AG04449 (cell line): ENCODE measurements at regions of chr12 and their contacts with region 1.

Region 1: DNA sequence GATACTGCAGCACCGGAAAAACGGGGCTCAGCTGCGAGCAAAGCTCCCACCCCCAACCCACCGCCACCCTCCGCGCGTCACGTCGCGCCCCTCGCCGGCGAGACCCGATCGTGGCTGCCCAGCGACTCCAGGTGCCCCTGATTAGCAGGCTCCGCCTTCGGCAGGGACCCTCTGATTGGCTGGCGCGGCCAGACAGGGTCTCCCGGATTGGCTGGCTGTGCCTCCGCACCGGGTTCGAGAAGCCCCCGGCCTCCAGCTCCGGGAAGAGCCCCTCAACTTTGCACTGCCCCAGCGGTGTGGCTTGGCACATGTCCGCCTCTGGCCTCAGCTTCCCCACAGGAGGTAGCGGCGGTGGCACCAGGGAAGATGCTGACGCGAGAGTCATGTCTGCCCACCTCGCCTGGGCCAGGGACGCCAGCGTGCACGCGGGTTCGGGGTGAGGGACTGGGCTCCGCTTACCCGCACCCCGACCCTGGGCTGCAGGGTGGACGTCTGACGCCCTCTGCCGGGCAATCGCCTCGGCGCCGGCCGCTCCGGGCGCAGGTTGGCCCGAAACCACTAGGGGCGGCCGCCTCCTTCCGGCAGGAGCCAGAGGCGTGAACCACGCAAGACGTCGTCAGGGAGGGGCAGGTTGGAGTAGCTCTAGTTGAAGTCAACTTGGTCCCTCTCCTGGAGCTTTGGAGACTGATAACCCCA is 498 bp upstream of the RHOF start:
- DNase-seq: peak; percentile 69
- H3K4me3 ChIP-seq: peak overlapping the region; percentile 59
- CTCF ChIP-seq: peak; percentile 100

Region 2: DNA sequence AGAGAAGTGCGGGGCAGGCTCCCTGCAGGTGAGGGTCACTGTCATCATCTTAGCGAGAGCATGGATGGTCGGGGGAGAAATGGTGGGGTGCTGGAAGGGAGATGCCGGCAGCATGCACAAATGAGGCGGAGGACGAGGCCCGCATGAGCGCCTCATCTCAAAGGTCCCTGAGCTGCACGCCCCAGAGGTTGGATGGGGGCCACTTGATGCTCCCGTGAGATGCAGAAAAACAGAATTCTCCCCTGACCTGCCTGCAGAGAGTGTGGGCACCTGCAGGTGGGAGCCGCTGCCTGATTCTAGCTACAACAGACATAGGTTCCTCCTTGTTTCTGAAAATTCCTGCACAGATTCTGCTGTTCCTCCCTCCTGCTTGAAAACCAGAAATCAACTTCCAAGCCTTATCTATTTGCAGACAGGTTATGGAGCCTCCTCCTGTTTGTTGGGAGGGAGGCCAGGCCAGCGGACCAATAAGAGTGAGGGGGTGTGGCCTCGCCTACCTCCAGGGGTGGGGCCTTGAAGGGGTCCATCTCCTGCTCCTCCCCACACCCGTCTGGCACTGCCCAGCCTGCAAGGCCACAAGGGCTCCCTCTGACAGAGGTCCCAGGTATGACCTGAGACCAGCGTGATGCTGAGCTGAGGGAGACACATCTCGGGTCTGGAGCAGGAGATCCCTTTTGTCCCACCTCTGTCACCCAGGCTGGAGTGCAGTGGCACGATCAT is 280.4 kb before region 1 on chr12:
- CTCF ChIA-PET with region 1: no interaction called
- POLR2A ChIA-PET with region 1: no interaction called
- DNase-seq: no peak
- H3K4me3 ChIP-seq: no peak overlapping the region
- CTCF ChIP-seq: no peak

Region 3: DNA sequence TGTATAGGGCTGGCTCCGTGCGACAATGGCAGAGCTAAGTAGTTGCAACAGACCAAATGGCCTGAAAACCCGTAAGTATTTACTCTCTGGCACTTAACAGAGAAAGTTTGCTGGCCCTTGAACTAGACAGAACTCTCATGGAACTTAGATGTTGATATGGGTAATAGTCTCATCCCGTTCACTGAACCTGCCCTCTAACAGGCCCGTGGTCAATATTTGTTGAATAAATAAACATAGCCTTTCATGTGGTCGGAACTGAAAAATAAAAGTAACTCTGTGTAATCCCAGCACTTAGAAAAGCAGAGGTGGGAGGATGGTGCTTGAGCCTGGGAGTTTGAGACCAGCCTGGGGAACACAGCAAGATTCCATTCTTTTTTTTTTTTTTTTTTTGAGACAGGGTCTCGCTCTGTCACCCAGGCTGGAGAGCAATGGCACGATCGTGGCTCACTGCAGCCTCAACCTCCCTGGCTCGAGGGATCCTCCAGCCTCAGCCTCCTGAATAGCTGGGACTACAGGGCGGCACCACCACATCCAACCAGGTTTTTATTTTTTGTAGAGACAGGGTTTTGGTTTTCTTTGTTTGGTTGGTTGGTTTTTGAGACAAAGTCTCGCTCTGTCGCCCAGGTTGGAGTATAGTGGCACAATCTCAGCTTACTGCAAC is 242.9 kb before region 1 on chr12:
- CTCF ChIA-PET with region 1: interaction called, 31 read pairs
- POLR2A ChIA-PET with region 1: no interaction called
- DNase-seq: no peak
- H3K4me3 ChIP-seq: no peak overlapping the region
- CTCF ChIP-seq: no peak

Region 4: GRCh38 chr12:121712461-121713256 is 81.3 kb before region 1 on chr12 and contains the start of gene TMEM120B:
- CTCF ChIA-PET with region 1: interaction called, 70 read pairs
- POLR2A ChIA-PET with region 1: interaction called, 4 read pairs
- DNase-seq: no peak
- H3K4me3 ChIP-seq: peak within 1 kb of the TSS; percentile 93
- CTCF ChIP-seq: no peak

Region 5: GRCh38 chr12:121773011-121773777 is 20.8 kb before region 1 on chr12:
- CTCF ChIA-PET with region 1: interaction called, 1,100 read pairs
- POLR2A ChIA-PET with region 1: no interaction called
- DNase-seq: no peak
- H3K4me3 ChIP-seq: no peak overlapping the region
- CTCF ChIP-seq: peak; percentile 88

Region 6: GRCh38 chr12:121839106-121839992 is 45.4 kb after region 1 on chr12:
- CTCF ChIA-PET with region 1: interaction called, 67 read pairs
- POLR2A ChIA-PET with region 1: no interaction called
- DNase-seq: peak; percentile 65
- H3K4me3 ChIP-seq: peak overlapping the region; percentile 73
- CTCF ChIP-seq: peak; percentile 54

Region 7: GRCh38 chr12:121888478-121889266 is 94.7 kb after region 1 on chr12 and contains the start of gene PSMD9:
- CTCF ChIA-PET with region 1: interaction called, 230 read pairs
- POLR2A ChIA-PET with region 1: interaction called, 12 read pairs
- DNase-seq: peak; percentile 79
- H3K4me3 ChIP-seq: peak within 1 kb of the TSS; percentile 99
- CTCF ChIP-seq: peak; percentile 80